B cell (primary cell): ENCODE measurements at regions of chr6 and their contacts with region 1.

Region 1: DNA sequence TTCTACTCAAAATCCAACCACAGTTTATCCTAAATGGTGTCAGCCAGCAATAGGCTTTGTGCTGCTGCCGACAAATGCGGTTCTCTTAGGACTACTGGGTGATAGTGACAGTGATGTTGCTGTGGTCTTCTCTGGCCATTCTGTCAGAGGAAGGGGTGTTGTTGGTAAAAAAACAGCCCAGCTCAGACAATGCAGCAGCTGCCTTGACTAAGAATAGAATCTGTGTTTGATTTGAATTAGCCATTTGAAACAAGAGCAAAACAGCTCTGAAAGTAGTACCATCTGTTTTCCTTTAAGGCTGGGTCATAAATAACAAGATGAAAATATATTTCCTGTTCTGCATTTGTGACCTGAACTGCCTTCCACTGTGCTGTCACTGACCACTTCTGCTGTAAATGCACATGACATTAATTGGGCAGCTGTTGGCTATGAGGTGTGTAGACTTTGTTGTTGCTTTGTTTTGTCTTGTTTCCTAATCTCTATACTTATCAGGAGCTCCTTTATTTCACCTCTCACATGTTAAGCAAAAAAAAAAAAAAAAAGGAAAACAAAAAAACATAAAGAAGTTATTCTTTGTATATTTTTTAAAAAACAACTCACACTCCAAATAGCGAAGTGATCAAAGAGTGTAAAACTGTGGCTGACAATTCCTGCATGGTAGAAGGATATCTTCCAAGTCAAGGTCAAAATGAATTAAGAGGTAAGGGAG is 497.8 kb upstream of the ARID1B start:
- DNase-seq: peak; percentile 43
- ATAC-seq: peak; percentile 76
- H3K4me3 ChIP-seq: peak overlapping the region in 3 of 5 experiments; percentile 6 to 29 (median 23)
- H3K4me3 Mint-ChIP-seq: peak overlapping the region; percentile 83
- H3K27ac ChIP-seq: peak overlapping the region; percentile 70 to 79
- H3K27ac Mint-ChIP-seq: peak overlapping the region; percentile 95
- H3K4me1 ChIP-seq: peaks cover 35 to 39% of the 10 kb centered on the region in 2 donors
- H3K4me1 Mint-ChIP-seq: peaks cover 59% of the 10 kb centered on the region
- H3K27me3 ChIP-seq: no peaks in the 10 kb centered on the region
- H3K27me3 Mint-ChIP-seq: no peaks in the 10 kb centered on the region
- CTCF ChIP-seq: no peak

Region 2: GRCh38 chr6:156175971-156176421 is 103.4 kb before region 1 on chr6:
- CTCF ChIA-PET with region 1: no interaction called
- POLR2A ChIA-PET with region 1: no interaction called
- intact Hi-C with region 1: loop called (anchors 10 kb)
- DNase-seq: no peak
- ATAC-seq: no peak
- H3K4me3 ChIP-seq: no peak overlapping the region
- H3K4me3 Mint-ChIP-seq: no peak overlapping the region
- H3K27ac ChIP-seq: no peak overlapping the region
- H3K27ac Mint-ChIP-seq: no peak overlapping the region
- H3K4me1 ChIP-seq: peaks cover 3 to 6% of the 10 kb centered on the region in 2 donors
- H3K4me1 Mint-ChIP-seq: peaks cover 12% of the 10 kb centered on the region
- H3K27me3 ChIP-seq: no peaks in the 10 kb centered on the region
- H3K27me3 Mint-ChIP-seq: no peaks in the 10 kb centered on the region
- CTCF ChIP-seq: no peak

Region 3: DNA sequence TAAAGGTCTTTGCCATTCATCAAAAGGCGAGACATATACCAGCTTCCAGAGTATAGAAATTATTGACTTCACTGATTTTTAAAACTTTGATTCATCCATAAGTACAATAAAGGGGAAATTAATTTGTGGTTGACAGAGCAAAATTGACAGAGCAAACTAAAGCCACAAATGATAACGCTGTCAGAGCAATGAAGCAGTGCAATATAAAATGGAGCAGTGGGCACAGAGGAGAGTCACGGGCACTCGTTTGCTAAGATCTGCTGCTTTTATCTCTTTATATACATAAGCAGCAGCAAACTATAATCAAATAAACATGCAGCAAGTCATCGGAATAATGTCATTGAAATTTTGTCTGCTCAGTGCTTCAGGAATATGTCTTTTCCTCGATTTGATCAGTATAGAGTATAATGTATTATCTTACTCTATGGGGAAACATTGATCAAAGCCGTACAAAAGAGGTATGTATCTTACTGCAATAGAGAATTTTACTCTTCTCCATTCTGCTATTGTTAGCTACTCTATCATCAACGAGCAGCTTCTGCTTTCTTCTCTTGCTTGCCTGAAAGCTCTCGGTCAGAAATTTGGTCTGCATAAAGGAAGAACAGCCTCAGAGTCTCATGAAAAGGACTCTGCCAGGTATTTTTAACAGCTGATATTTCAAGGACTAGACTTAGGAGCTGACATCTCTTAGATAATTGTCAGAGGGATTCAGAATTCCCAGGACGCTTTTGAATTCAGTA is 48.2 kb before region 1 on chr6:
- CTCF ChIA-PET with region 1: no interaction called
- POLR2A ChIA-PET with region 1: no interaction called
- intact Hi-C with region 1: no loop called
- DNase-seq: no peak
- ATAC-seq: no peak
- H3K4me3 ChIP-seq: no peak overlapping the region
- H3K4me3 Mint-ChIP-seq: peak overlapping the region; percentile 4
- H3K27ac ChIP-seq: no peak overlapping the region
- H3K27ac Mint-ChIP-seq: no peak overlapping the region
- H3K4me1 ChIP-seq: no peaks in the 10 kb centered on the region
- H3K4me1 Mint-ChIP-seq: peaks cover 14% of the 10 kb centered on the region
- H3K27me3 ChIP-seq: no peaks in the 10 kb centered on the region
- H3K27me3 Mint-ChIP-seq: peaks cover 4% of the 10 kb centered on the region
- CTCF ChIP-seq: no peak

Region 4: GRCh38 chr6:156396068-156396771 is 116.8 kb after region 1 on chr6:
- CTCF ChIA-PET with region 1: no interaction called
- POLR2A ChIA-PET with region 1: interaction called, 22 read pairs
- intact Hi-C with region 1: loop called (anchors 5 kb)
- DNase-seq: peak; percentile 56
- ATAC-seq: peak; percentile 60
- H3K4me3 ChIP-seq: peak overlapping the region in 3 of 5 experiments; percentile 18 to 45 (median 32)
- H3K4me3 Mint-ChIP-seq: peak overlapping the region; percentile 66
- H3K27ac ChIP-seq: peak overlapping the region; percentile 76 to 77
- H3K27ac Mint-ChIP-seq: peak overlapping the region; percentile 91
- H3K4me1 ChIP-seq: peaks cover 73 to 74% of the 10 kb centered on the region in 2 donors
- H3K4me1 Mint-ChIP-seq: peaks cover 72% of the 10 kb centered on the region
- H3K27me3 ChIP-seq: no peaks in the 10 kb centered on the region
- H3K27me3 Mint-ChIP-seq: peaks cover 9% of the 10 kb centered on the region
- CTCF ChIP-seq: no peak

Region 5: GRCh38 chr6:156564127-156564806 is 284.9 kb after region 1 on chr6:
- CTCF ChIA-PET with region 1: no interaction called
- POLR2A ChIA-PET with region 1: no interaction called
- intact Hi-C with region 1: no loop called
- DNase-seq: peak; percentile 86
- ATAC-seq: peak; percentile 100
- H3K4me3 ChIP-seq: no peak overlapping the region
- H3K4me3 Mint-ChIP-seq: no peak overlapping the region
- H3K27ac ChIP-seq: no peak overlapping the region
- H3K27ac Mint-ChIP-seq: no peak overlapping the region
- H3K4me1 ChIP-seq: peaks cover 2 to 12% of the 10 kb centered on the region in 2 donors
- H3K4me1 Mint-ChIP-seq: peaks cover 16% of the 10 kb centered on the region
- H3K27me3 ChIP-seq: no peaks in the 10 kb centered on the region
- H3K27me3 Mint-ChIP-seq: peaks cover 18% of the 10 kb centered on the region
- CTCF ChIP-seq: peak; percentile 98